SK-N-SH (cell line): ENCODE measurements at regions of chr6 and their contacts with region 1.

Region 1: DNA sequence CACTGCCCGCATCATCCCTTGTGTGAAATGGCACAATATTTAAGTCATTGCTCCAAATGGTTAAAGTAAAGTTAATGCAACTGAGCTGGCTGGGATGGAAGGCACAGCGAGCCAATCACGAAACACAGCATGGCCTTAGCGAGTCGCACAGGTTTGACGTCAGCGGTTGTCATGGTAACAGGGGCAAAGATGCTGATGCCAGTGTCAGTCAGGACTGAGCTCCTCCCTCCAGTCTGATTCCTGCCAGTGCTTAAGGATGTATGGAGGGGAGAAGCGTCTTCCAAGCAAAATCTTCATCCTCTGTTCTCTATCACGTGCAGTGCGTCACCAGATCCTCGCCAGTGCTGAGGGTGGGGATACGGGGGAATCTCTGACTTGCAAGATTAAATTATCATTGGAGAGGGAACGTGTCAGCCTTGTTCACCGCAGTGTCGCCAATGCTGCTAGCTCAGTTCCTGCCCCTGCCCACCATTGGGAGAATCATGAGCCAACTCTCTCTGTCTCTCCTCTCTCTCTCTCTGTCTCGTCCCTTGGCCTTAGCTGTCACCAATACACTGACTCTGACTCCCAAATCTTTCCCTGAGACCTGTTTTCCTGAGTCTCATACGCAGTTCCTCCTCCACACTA is 24.5 kb downstream of the TSPYL4 start:
- DNase-seq: peak; percentile 84
- H3K4me3 ChIP-seq: peak overlapping the region; percentile 64 to 71
- H3K27ac ChIP-seq: peak overlapping the region; percentile 71 to 89
- H3K4me1 ChIP-seq: peaks cover 3 to 10% of the 10 kb centered on the region in 2 experiments; a peak in 2 of 4 replicates
- H3K27me3 ChIP-seq: no peaks in the 10 kb centered on the region
- CTCF ChIP-seq: no peak
- EP300 ChIP-seq: 0 out of 4 replicates have a peak, but pooled peaks of 1 of the 2 experiments have one; percentile 15
- RAD21 ChIP-seq: no peak

Region 2: DNA sequence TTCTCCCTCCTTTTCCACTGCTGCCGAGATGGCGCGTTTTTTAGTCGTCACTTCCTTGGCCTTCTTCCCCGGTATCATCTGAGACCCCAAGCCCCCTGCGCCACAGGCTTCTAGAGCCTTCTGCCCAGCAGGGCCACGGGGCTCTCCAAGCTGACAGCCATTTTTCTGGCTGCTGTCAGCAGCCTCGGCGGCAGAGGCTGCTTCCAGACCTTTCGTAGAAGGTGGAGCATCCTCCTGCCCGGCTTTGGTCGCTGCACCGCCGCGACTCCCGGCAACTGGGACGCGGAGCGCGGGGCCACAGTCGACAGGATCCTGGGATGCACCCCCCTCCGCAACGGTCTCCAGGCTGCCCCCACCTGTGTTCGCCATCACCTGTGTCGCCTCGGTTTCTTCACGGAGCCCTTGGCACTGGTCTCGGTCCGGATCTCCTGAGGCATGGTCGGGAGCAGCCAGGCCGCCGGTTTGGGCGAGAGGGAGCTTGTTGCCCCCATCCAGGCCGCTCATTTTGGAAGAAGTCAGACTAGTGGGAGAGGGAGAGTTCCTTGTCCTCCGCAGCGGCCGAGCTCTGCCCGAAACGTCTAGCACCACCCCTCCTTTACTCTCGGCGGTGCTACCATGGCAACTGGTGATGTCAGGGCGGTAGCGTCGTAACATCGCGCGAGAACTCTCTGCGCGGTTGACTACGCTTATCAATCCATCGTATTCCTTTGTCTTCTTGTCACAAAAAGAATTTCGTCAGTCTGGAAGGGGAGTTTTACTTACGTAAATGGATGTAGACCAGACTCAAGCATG is 24.3 kb after region 1 on chr6 and contains the start of gene TSPYL4:
- CTCF ChIA-PET with region 1: interaction called, 6 read pairs
- POLR2A ChIA-PET with region 1: interaction called, 34 read pairs
- DNase-seq: peak; percentile 91
- H3K4me3 ChIP-seq: peak within 1 kb of the TSS; percentile 92 to 99
- H3K27ac ChIP-seq: peak within 1 kb of the TSS; percentile 92 to 97
- H3K4me1 ChIP-seq: peaks cover 19 to 32% of the 10 kb centered on the region in 2 experiments; a peak in 3 of 4 replicates
- H3K27me3 ChIP-seq: no peaks in the 10 kb centered on the region
- CTCF ChIP-seq: no peak
- EP300 ChIP-seq: peak in 1 of 2 experiments; percentile 43; a peak in 1 of 4 replicates
- RAD21 ChIP-seq: no peak
- polyA plus RNA-seq, gene TSPYL4: 29.1 and 44.5 TPM in 2 replicates